Activated B cell treated with CpG ODN at 0.5 μM for 24 hours (primary cell): ENCODE measurements at regions of chr3 and their contacts with region 1.

Region 1: DNA sequence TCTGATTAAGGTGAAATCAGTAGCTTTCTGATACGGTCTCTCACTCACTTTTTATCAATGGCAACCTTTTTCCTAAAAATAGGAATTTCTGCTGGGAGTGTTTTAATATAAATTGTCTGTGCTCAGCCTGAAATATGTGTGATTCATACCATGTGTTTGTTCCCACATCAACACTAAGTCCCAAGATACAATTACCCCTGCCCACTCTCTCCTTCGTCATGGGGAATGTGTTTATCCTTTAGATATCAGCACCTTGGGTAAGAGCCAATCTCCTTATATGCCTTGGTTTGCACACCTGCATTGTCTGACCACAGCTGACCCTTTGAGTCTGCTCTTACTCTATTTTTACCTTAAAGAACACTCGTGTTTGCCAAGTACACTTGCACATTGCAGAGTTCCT is 356.4 kb downstream of the LPP start:
- DNase-seq: no peak
- ATAC-seq: no peak
- H3K4me3 Mint-ChIP-seq: no peak overlapping the region
- H3K27ac Mint-ChIP-seq: no peak overlapping the region
- H3K4me1 Mint-ChIP-seq: peaks cover 24% of the 10 kb centered on the region
- H3K27me3 Mint-ChIP-seq: no peaks in the 10 kb centered on the region
- CTCF ChIP-seq: no peak

Region 2: DNA sequence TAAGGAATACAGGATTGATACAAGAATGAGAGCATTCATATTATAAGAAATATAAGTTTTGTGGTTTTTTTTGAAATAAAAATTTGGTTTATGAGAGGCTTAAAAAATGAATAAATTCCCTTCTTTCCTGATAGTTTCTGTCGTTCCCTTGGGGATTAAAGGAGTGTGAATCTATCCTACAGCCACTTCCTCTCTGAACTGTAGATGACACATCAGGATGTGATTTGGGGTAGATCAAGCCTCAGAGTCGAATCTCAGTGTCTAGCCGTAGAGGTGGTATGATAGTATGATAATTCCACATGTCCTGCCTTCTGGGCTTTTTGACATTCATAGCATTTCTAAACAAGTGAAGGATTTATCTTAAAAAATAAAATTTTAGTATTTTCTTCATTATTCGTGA is 13.3 kb before region 1 on chr3:
- CTCF ChIA-PET with region 1: no interaction called
- POLR2A ChIA-PET with region 1: interaction called, 3 read pairs
- intact Hi-C with region 1: loop called (anchors 2 kb)
- DNase-seq: no peak
- ATAC-seq: no peak
- H3K4me3 Mint-ChIP-seq: no peak overlapping the region
- H3K27ac Mint-ChIP-seq: no peak overlapping the region
- H3K4me1 Mint-ChIP-seq: peaks cover 31% of the 10 kb centered on the region
- H3K27me3 Mint-ChIP-seq: no peaks in the 10 kb centered on the region
- CTCF ChIP-seq: no peak